Adrenal gland (tissue), 19 donors: ENCODE measurements at regions of chr18 and their contacts with region 1.

Region 1: GRCh38 chr18:58148954-58149471 is 105.0 kb downstream of the NEDD4L start:
- DNase-seq: peak in 6 of 7 donors; percentile 38 to 61 (median 45)
- H3K4me3 ChIP-seq: peak overlapping the region in 1 of 4 donors; percentile 10
- H3K27ac ChIP-seq: peak overlapping the region in 3 of 5 donors; percentile 23 to 81 (median 58)
- H3K4me1 ChIP-seq: peaks cover 4 to 16% of the 10 kb centered on the region in 2 donors
- H3K27me3 ChIP-seq: no peaks in the 10 kb centered on the region
- CTCF ChIP-seq: no peak
- POLR2A ChIP-seq: no peak

Region 2: GRCh38 chr18:57891707-57892391 is 257.2 kb before region 1 on chr18:
- intact Hi-C with region 1: no loop called
- DNase-seq: no peak
- H3K4me3 ChIP-seq: no peak overlapping the region
- H3K27ac ChIP-seq: no peak overlapping the region
- H3K4me1 ChIP-seq: no peaks in the 10 kb centered on the region
- H3K27me3 ChIP-seq: no peaks in the 10 kb centered on the region
- CTCF ChIP-seq: no peak
- POLR2A ChIP-seq: no peak

Region 3: DNA sequence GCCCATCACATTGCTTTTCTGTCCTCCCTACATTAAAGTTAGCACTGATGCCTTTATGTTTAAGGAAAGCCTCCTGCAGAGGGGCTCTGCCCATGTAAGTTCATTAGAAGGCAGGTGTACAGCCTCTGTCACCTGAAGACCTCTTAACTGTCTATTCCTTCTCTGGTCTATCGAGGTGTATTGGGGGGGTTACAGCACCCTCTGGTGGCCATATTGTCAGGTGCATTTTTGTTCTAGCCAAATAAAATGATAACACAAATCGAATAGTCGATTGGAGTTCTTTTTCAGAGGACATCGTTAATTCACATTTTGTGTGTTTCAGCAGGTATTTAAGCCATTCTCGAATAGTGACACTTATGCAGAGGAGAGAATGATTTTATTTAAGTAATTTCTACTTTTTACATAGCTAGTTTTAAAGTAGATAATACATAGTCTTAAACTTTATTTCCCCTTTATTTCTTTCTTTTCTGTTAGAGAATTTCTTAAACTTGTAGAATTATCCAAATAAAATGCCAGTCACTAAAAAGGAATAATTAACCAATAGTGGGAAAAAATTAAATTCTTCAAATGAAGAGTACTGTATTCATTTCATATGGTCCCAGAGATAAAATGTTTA is 31.8 kb after region 1 on chr18:
- intact Hi-C with region 1: loop called (anchors 5 kb)
- DNase-seq: peak; percentile 28 to 86 (median 60)
- H3K4me3 ChIP-seq: no peak overlapping the region
- H3K27ac ChIP-seq: no peak overlapping the region
- H3K4me1 ChIP-seq: peaks cover 4 to 26% of the 10 kb centered on the region in 2 donors
- H3K27me3 ChIP-seq: no peaks in the 10 kb centered on the region
- CTCF ChIP-seq: peak; percentile 72 to 91 (median 84)
- POLR2A ChIP-seq: no peak

Region 4: DNA sequence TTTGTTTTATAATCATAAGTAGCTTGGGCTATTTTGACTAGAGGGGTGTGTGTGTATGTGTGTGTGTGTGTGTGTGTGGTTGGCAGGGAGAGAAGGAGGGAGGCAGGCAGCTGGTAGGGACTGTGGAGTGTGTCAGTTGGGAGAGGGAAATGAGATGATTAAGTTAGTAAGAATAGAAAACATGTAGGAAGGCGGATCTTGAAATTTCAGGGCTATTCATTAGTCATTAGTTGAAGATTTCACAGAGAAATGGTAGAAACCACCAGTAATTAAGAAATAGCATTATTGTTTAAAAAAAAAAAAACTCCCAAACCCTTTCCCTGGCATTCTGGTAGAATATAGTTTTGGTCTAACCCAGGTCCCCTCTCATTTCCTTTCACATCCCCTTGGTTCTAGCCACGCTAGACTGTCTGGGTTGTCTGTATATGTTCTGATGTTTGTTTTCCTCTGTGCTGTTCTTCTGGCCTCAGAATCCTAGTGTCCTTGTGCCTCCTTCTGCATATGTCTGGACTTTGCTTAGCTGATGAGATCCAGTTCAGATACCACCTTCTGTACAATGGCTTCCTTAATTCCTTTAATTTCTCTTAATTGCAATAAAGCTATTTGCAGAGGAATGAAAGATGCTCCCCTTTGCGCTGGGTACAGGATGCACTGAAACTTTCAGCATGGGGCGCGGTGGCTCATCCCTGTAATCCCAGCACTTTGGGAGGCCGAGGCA is 56.6 kb after region 1 on chr18:
- intact Hi-C with region 1: no loop called
- DNase-seq: peak; percentile 24 to 71 (median 45)
- H3K4me3 ChIP-seq: no peak overlapping the region
- H3K27ac ChIP-seq: peak overlapping the region in 2 of 5 donors; percentile 31 to 37
- H3K4me1 ChIP-seq: peaks cover 12 to 14% of the 10 kb centered on the region in 2 donors
- H3K27me3 ChIP-seq: no peaks in the 10 kb centered on the region
- CTCF ChIP-seq: no peak
- POLR2A ChIP-seq: no peak

Region 5: GRCh38 chr18:58288922-58289797 is 140.1 kb after region 1 on chr18:
- intact Hi-C with region 1: no loop called
- DNase-seq: peak in 1 of 7 donors; percentile 16
- H3K4me3 ChIP-seq: no peak overlapping the region
- H3K27ac ChIP-seq: no peak overlapping the region
- H3K4me1 ChIP-seq: no peaks in the 10 kb centered on the region
- H3K27me3 ChIP-seq: no peaks in the 10 kb centered on the region
- CTCF ChIP-seq: no peak
- POLR2A ChIP-seq: no peak

Region 6: GRCh38 chr18:58321986-58322385 is 173.0 kb after region 1 on chr18:
- intact Hi-C with region 1: loop called in 1 of 2 experiments (anchors 10 kb)
- DNase-seq: peak; percentile 78 to 90 (median 86)
- H3K4me3 ChIP-seq: no peak overlapping the region
- H3K27ac ChIP-seq: peak overlapping the region in 3 of 5 donors; percentile 9 to 67 (median 56)
- H3K4me1 ChIP-seq: peaks cover 0 to 6% of the 10 kb centered on the region in 2 donors
- H3K27me3 ChIP-seq: no peaks in the 10 kb centered on the region
- CTCF ChIP-seq: peak; percentile 31 to 71 (median 62)
- POLR2A ChIP-seq: peak in 1 of 2 donors; percentile 67